ENCODE measurements at regions of chr1 and their contacts with region 1.

Region 1: DNA sequence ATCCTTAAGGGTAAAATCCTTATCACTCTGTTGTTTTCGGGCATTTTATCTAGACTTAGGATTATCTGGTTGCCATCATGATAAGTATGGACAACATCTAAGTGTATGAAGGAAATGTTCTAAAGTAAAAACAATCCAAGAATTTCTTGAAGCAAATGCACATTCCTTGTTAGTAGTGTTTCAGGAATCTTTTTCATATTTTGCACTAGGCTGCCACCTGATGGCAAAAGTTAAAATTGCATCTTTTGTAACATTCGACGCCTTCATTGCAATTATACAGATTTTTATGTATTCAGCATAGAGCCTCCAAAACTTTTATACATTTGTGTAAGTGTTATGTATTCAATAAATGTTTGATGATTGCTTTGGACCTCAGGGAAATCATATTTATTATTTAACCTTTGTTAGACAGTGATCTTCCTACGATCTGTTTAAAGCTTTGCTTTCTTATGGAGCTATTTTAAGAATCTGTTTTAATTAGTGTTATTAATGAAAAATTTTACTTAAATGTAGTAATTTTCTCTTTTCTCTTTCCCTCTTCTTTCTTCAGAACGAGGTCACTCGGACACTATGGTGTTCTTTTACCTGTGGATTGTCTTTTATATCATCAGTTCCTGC is 49.4 kb upstream of the KIAA1614 start:
- DNase-seq: peak; percentile 81
- H3K4me3 Mint-ChIP-seq: no peak overlapping the region
- H3K27ac Mint-ChIP-seq: no peak overlapping the region
- H3K4me1 Mint-ChIP-seq: peaks cover 26% of the 10 kb centered on the region
- H3K27me3 Mint-ChIP-seq: no peaks in the 10 kb centered on the region
- CTCF ChIP-seq: peak; percentile 89

Region 2: DNA sequence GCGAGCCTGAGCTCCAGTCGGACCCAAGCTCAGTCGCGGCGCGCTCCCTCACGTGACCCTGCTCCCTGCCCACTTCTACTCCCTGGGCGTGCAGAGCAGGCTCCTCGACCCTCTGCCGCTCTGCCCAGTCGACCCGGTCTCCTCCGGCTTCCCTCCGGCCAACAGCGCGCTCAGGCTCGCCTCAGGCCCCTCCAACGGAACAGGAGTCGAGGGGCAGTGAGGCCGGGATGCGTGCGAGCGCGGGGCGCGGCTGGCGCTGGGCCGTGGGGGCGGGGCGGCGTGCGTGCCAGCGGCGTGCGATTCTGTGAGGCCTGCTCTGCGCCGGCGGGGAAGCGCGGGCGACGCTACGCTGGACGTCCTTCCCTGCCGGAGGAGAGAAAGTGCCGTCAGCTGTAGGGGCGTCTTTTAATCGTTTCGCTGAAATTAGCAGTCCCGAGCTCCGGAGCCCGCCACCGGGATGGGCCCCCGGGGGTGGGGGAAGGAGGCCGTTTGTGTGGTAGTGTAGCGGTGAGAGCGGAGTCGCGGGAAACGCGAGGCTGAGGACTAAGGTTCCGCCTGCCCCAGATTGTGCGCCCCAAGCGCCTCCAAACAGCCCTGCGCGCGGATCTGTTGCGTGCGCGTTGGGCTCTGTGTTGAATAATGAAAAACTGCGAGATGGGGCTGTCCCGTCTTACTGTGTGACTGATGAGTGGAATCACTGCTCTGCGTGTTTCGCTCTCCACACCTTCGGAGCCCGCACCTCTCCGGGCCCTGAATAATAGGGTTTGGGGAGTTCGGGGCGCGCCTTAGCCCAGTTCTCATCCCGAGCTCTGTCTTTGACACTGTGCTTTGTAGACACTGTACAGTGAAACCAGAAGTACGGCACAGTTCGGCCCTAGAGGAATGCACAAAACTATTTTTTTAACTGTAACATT is 360.6 kb before region 1 on chr1 and contains the start of gene ACBD6:
- CTCF ChIA-PET with region 1: interaction called, 39 read pairs
- POLR2A ChIA-PET with region 1: interaction called, 45 read pairs
- intact Hi-C with region 1: no loop called
- DNase-seq: peak; percentile 94
- H3K4me3 Mint-ChIP-seq: peak within 1 kb of the TSS; percentile 94
- H3K27ac Mint-ChIP-seq: peak within 1 kb of the TSS; percentile 97
- H3K4me1 Mint-ChIP-seq: peaks cover 29% of the 10 kb centered on the region
- H3K27me3 Mint-ChIP-seq: no peaks in the 10 kb centered on the region
- CTCF ChIP-seq: no peak
- total RNA-seq, gene ACBD6: 123 and 136 TPM in 2 replicates

Region 3: DNA sequence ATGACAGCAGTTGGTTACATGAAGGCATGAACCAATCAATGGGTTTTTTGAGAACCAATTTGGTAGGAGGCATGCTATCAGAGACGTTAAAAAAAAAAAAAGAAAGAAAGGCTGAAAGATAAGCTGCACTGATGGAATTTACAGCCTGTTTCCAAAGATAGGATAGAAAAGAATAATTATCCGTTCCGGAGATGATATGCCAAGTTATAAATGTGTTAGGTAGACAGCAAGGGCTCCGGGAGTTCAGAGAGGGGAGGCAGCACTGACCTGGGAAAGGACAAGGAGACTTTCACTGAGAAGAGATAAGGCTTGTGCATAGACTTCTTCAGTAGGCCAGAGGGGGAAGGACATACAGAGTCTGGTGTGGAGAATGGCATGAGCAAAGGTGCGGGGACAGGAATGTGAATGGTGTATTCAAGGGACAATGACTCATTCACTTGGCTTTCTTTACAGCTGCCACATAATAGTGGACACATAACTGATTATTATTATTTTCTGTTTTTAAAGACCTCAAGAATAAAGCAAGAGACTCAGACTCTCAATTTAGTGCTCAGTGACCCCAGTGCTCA is 336.1 kb before region 1 on chr1:
- CTCF ChIA-PET with region 1: interaction called, 253 read pairs
- POLR2A ChIA-PET with region 1: interaction called, 38 read pairs
- intact Hi-C with region 1: no loop called
- DNase-seq: peak; percentile 82
- H3K4me3 Mint-ChIP-seq: no peak overlapping the region
- H3K27ac Mint-ChIP-seq: peak overlapping the region; percentile 92
- H3K4me1 Mint-ChIP-seq: peaks cover 81% of the 10 kb centered on the region
- H3K27me3 Mint-ChIP-seq: no peaks in the 10 kb centered on the region
- CTCF ChIP-seq: no peak

Region 4: DNA sequence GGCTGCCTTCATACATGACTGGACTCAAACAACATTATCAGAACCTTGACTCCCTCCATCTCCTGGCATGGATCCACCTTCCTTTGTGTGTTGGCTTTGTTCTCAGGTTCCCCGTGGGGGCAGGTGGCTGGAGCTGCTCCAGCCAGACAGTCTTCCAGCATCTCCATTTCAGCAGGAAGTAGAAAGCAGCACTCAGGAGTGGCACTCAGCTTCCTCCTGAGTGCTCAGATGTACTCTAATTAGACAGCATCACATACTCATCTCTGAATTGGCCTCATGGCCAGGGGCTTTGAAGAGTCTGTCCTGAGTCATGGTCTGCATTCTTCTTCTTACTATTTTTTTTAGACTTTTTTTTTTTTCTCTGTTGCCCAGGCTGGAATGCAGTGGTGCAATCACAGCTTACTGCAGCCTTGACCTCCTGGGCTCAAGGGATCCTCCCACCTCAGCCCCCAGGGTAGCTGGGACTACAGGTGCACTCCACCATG is 276.6 kb before region 1 on chr1:
- CTCF ChIA-PET with region 1: interaction called, 16 read pairs
- POLR2A ChIA-PET with region 1: interaction called, 3 read pairs
- intact Hi-C with region 1: no loop called
- DNase-seq: peak; percentile 93
- H3K4me3 Mint-ChIP-seq: no peak overlapping the region
- H3K27ac Mint-ChIP-seq: peak overlapping the region; percentile 99
- H3K4me1 Mint-ChIP-seq: peaks cover 34% of the 10 kb centered on the region
- H3K27me3 Mint-ChIP-seq: no peaks in the 10 kb centered on the region
- CTCF ChIP-seq: no peak

Region 5: GRCh38 chr1:180778782-180779398 is 84.4 kb before region 1 on chr1:
- CTCF ChIA-PET with region 1: interaction called, 19 read pairs
- POLR2A ChIA-PET with region 1: interaction called, 3 read pairs
- intact Hi-C with region 1: loop called (anchors 5 kb)
- DNase-seq: peak; percentile 59
- H3K4me3 Mint-ChIP-seq: no peak overlapping the region
- H3K27ac Mint-ChIP-seq: no peak overlapping the region
- H3K4me1 Mint-ChIP-seq: peaks cover 9% of the 10 kb centered on the region
- H3K27me3 Mint-ChIP-seq: no peaks in the 10 kb centered on the region
- CTCF ChIP-seq: peak; percentile 57

Region 6: GRCh38 chr1:181166377-181167196 is 303.3 kb after region 1 on chr1:
- CTCF ChIA-PET with region 1: interaction called, 14 read pairs
- POLR2A ChIA-PET with region 1: no interaction called
- intact Hi-C with region 1: no loop called
- DNase-seq: peak; percentile 90
- H3K4me3 Mint-ChIP-seq: no peak overlapping the region
- H3K27ac Mint-ChIP-seq: no peak overlapping the region
- H3K4me1 Mint-ChIP-seq: no peaks in the 10 kb centered on the region
- H3K27me3 Mint-ChIP-seq: no peaks in the 10 kb centered on the region
- CTCF ChIP-seq: peak; percentile 97